PC-9 (cell line): ENCODE measurements at regions of chr3 and their contacts with region 1.

Region 1: GRCh38 chr3:31166249-31166885 is 271.9 kb upstream of the GADL1 start:
- DNase-seq: peak; percentile 35 to 83
- H3K4me3 ChIP-seq: no peak overlapping the region
- H3K27ac ChIP-seq: peak overlapping the region; percentile 57
- H3K4me1 ChIP-seq: peaks cover 20% of the 10 kb centered on the region
- H3K27me3 ChIP-seq: no peaks in the 10 kb centered on the region
- CTCF ChIP-seq: no peak

Region 2: GRCh38 chr3:30384546-30385072 is 781.8 kb before region 1 on chr3:
- CTCF ChIA-PET with region 1: no interaction called
- POLR2A ChIA-PET with region 1: no interaction called
- intact Hi-C with region 1: no loop called
- DNase-seq: no peak
- H3K4me3 ChIP-seq: no peak overlapping the region
- H3K27ac ChIP-seq: no peak overlapping the region
- H3K4me1 ChIP-seq: no peaks in the 10 kb centered on the region
- H3K27me3 ChIP-seq: no peaks in the 10 kb centered on the region
- CTCF ChIP-seq: no peak

Region 3: GRCh38 chr3:31307131-31307785 is 140.9 kb after region 1 on chr3:
- CTCF ChIA-PET with region 1: no interaction called
- POLR2A ChIA-PET with region 1: no interaction called
- intact Hi-C with region 1: loop called (anchors 1 kb)
- DNase-seq: no peak
- H3K4me3 ChIP-seq: no peak overlapping the region
- H3K27ac ChIP-seq: no peak overlapping the region
- H3K4me1 ChIP-seq: peaks cover 9% of the 10 kb centered on the region
- H3K27me3 ChIP-seq: no peaks in the 10 kb centered on the region
- CTCF ChIP-seq: no peak

Region 4: DNA sequence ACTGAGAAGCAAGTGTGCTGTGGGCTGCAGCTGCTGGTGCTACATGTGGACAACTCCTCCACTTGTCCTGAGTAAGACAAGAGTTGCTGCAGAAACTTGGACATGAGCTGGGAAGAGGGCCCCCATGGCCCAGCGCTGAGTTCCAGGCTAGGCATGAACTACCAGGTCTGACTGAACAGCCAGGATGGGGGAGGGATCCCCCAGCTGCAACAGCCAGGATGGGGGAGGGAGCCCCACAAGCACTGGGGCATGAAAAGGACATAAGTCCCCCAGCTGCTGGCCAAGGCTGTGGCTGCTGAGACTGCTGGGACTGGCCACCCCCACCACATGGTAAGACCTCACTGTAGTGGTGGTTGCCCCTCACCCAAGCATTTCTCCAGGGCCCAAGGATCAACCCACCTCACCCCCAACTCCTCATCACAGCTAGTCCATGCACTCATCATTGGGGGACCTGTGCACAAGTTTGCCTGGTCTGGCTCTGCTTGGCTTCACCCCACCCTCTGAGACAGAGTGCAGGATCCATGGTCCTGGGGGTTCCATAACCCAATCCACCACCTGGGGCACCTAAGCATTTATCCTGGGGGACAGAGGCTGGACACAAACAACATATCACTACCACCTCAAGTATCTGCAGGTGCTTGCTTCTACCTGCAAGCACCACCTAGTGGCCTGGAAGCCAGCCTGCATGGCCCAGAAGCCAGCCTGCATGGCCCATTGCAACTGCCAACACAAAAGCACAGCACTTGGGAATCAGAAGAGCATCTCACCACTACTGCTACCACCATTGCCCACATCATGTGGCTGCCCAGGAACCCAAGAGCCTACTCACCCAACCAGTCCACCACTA is 281.9 kb after region 1 on chr3:
- CTCF ChIA-PET with region 1: no interaction called
- POLR2A ChIA-PET with region 1: no interaction called
- intact Hi-C with region 1: loop called (anchors 10 kb)
- DNase-seq: no peak
- H3K4me3 ChIP-seq: no peak overlapping the region
- H3K27ac ChIP-seq: no peak overlapping the region
- H3K4me1 ChIP-seq: peaks cover 18% of the 10 kb centered on the region
- H3K27me3 ChIP-seq: no peaks in the 10 kb centered on the region
- CTCF ChIP-seq: peak; percentile 51; the same call in 1 of the 2 replicates